MCF 10A (cell line): ENCODE measurements at regions of chr10 and their contacts with region 1.

Region 1: GRCh38 chr10:36880898-36881297 is 244.5 kb upstream of the ANKRD30A start:
- DNase-seq: peak; percentile 32
- H3K4me3 Mint-ChIP-seq: no peak overlapping the region
- H3K27ac Mint-ChIP-seq: no peak overlapping the region
- H3K4me1 Mint-ChIP-seq: no peaks in the 10 kb centered on the region
- H3K27me3 Mint-ChIP-seq: peaks cover 31% of the 10 kb centered on the region
- CTCF ChIP-seq: peak; percentile 68

Region 2: DNA sequence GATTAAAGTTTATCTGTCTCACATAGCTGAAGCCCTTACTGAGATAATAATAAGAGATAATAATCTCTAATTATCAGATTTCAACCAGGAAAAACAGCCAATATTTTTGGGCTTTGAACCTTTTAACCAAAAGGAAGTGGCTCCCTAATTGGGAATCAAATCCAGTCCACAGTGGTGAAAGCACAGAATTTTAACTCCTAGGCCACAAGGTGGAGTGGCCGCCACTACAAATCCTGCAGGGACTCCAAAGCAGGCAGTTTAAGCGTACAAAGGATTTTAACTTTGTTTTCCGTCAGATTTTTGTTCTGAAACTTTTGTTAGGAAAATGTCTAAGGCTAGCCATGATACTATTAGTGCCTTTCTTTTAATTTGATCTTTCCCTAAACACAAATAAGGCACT is 1644.2 kb before region 1 on chr10:
- CTCF ChIA-PET with region 1: interaction called, 4 read pairs
- POLR2A ChIA-PET with region 1: no interaction called
- intact Hi-C with region 1: loop called (anchors 5 kb)
- DNase-seq: peak; percentile 13
- H3K4me3 Mint-ChIP-seq: no peak overlapping the region
- H3K27ac Mint-ChIP-seq: no peak overlapping the region
- H3K4me1 Mint-ChIP-seq: no peaks in the 10 kb centered on the region
- H3K27me3 Mint-ChIP-seq: no peaks in the 10 kb centered on the region
- CTCF ChIP-seq: peak; percentile 19

Region 3: DNA sequence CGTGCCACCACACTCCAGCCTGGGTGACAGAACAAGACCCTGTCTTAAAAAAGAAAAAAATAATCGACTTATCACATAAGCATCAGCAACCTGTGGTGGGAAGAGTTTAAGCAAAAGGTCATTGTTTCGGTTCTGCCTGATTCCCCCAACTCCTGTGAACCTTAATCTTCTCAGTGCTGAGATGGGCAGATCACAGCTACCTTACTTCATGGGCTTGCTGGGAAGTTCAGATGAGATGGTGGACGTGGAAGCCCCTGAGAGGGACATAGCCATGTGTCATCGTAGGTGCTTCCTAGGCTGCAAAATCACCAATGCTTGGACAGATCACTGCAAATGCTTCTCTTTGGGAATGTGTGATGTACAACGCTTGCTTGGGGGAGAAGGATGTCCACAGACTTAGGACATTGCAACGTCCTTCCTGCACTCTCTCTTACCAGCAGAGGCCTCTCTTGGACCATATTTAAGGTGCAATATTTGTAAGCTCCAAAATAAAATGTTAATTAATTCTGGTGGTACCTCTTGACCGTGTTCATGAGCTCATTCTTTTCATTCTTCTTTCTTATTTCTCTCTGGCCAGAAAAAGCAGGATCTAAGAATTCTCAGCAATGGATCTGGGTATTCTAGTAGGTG is 1267.2 kb before region 1 on chr10:
- CTCF ChIA-PET with region 1: interaction called, 34 read pairs
- POLR2A ChIA-PET with region 1: no interaction called
- intact Hi-C with region 1: loop called (anchors 5 kb)
- DNase-seq: peak; percentile 32
- H3K4me3 Mint-ChIP-seq: no peak overlapping the region
- H3K27ac Mint-ChIP-seq: no peak overlapping the region
- H3K4me1 Mint-ChIP-seq: no peaks in the 10 kb centered on the region
- H3K27me3 Mint-ChIP-seq: peaks cover 16% of the 10 kb centered on the region
- CTCF ChIP-seq: peak; percentile 63

Region 4: DNA sequence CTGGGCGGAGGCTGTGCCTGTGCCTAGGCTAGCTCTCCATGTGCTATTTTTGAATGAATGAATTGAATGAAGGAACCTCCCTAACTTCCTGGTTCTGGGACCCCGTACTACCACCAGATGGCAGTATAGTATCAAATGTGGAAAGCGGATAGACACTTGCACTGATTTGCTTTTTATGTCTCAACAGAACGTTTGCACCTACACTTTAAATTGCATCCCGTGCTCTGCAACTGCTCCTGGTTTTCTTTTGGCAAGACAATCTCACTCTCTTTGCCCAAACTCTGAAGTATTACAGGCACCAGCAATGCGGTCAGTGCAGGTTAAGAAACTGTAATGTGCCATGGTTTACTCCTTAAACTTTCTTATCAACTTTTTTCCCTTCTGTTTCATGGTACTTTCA is 1245.3 kb before region 1 on chr10:
- CTCF ChIA-PET with region 1: interaction called, 14 read pairs
- POLR2A ChIA-PET with region 1: no interaction called
- intact Hi-C with region 1: loop called (anchors 1 kb)
- DNase-seq: peak; percentile 79
- H3K4me3 Mint-ChIP-seq: no peak overlapping the region
- H3K27ac Mint-ChIP-seq: no peak overlapping the region
- H3K4me1 Mint-ChIP-seq: peaks cover 23% of the 10 kb centered on the region
- H3K27me3 Mint-ChIP-seq: no peaks in the 10 kb centered on the region
- CTCF ChIP-seq: peak; percentile 87